Sigmoid colon (tissue), 7 donors: ENCODE measurements at regions of chr2 and their contacts with region 1.

Region 1: GRCh38 chr2:227471924-227472264 is at the start of gene AGFG1:
- DNase-seq: peak; percentile 89
- H3K4me3 ChIP-seq: peak within 1 kb of the TSS; percentile 87 to 99 (median 98)
- H3K27ac ChIP-seq: peak within 1 kb of the TSS; percentile 92 to 94 (median 94)
- H3K4me1 ChIP-seq: peaks cover 0 to 34% (median 24%) of the 10 kb centered on the region in 4 donors
- H3K27me3 ChIP-seq: no peaks in the 10 kb centered on the region
- CTCF ChIP-seq: peak; percentile 80 to 97 (median 92)
- EP300 ChIP-seq: no peak
- POLR2A ChIP-seq: no peak
- total RNA-seq, gene AGFG1: 41.8 to 53.9 (median 44.1) TPM

Region 2: DNA sequence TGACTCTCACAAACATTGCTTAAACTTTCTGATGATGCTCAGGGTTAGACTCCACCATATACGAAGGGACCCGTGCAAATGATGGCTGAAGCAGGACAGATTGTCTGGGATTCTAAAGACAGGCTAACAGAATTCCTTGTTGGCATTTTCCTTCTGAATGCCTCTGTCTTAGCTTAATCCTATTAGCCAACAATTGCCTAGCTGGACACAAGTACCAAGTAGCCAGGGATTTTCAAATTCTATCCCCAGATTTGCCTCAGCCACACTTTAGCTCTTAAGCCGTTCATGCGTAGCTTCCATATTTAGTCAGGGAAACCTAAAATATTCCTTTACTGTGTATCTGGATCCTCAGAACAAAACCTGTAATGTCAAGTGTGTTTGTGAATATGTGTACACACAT is 267.4 kb before region 1 on chr2:
- intact Hi-C with region 1: no loop called
- DNase-seq: no peak
- H3K4me3 ChIP-seq: no peak overlapping the region
- H3K27ac ChIP-seq: no peak overlapping the region
- H3K4me1 ChIP-seq: no peaks in the 10 kb centered on the region
- H3K27me3 ChIP-seq: no peaks in the 10 kb centered on the region
- CTCF ChIP-seq: no peak
- EP300 ChIP-seq: no peak
- POLR2A ChIP-seq: no peak

Region 3: DNA sequence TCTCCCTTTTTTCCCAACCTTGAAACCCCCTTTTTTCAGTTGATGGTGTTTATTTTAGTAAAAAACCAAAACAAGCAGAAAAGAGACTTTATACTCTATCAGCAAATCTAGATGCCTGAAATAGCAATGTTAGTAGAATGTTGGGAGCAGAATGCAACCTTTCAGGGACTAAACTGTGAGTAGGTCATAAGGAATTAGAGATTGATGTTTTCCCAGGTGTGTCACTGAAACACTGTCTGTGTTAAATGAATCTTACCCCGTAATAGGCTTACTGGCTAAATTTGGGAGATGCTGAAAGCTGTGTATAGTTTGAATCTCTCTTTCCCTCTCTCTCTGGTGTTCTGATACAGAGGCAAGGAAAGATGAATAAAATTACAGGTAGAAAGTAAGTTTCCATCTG is 43.8 kb after region 1 on chr2:
- intact Hi-C with region 1: loop called (anchors 5 kb)
- DNase-seq: no peak
- H3K4me3 ChIP-seq: no peak overlapping the region
- H3K27ac ChIP-seq: peak overlapping the region in 2 of 4 donors; percentile 49 to 55
- H3K4me1 ChIP-seq: peaks cover 0 to 72% (median 66%) of the 10 kb centered on the region in 4 donors
- H3K27me3 ChIP-seq: no peaks in the 10 kb centered on the region
- CTCF ChIP-seq: no peak
- EP300 ChIP-seq: no peak
- POLR2A ChIP-seq: no peak

Region 4: DNA sequence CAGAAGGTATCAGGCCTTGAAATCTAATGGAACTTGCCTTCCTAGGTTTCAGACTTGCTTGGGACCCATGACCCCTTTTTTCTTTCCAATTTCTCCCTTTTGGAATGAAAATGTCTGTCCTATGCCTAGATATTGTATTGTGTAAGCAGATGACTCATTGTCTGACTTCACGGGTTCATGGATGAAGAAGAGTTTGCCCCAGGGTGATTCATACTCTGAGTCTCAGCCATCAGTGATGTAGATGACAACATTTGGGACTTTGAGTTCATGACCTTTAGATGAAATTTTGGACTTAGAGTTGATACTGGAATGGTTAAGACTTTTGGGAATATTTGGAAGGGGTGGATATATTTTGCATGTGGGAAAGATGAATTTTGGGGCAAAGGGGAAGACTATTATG is 183.6 kb after region 1 on chr2:
- intact Hi-C with region 1: loop called (anchors 10 kb)
- DNase-seq: no peak
- H3K4me3 ChIP-seq: no peak overlapping the region
- H3K27ac ChIP-seq: peak overlapping the region in 1 of 4 donors; percentile 30
- H3K4me1 ChIP-seq: no peaks in the 10 kb centered on the region
- H3K27me3 ChIP-seq: no peaks in the 10 kb centered on the region
- CTCF ChIP-seq: no peak
- EP300 ChIP-seq: no peak
- POLR2A ChIP-seq: no peak